H1 (cell line): ENCODE measurements at regions of chr1 and their contacts with region 1.

Region 1: DNA sequence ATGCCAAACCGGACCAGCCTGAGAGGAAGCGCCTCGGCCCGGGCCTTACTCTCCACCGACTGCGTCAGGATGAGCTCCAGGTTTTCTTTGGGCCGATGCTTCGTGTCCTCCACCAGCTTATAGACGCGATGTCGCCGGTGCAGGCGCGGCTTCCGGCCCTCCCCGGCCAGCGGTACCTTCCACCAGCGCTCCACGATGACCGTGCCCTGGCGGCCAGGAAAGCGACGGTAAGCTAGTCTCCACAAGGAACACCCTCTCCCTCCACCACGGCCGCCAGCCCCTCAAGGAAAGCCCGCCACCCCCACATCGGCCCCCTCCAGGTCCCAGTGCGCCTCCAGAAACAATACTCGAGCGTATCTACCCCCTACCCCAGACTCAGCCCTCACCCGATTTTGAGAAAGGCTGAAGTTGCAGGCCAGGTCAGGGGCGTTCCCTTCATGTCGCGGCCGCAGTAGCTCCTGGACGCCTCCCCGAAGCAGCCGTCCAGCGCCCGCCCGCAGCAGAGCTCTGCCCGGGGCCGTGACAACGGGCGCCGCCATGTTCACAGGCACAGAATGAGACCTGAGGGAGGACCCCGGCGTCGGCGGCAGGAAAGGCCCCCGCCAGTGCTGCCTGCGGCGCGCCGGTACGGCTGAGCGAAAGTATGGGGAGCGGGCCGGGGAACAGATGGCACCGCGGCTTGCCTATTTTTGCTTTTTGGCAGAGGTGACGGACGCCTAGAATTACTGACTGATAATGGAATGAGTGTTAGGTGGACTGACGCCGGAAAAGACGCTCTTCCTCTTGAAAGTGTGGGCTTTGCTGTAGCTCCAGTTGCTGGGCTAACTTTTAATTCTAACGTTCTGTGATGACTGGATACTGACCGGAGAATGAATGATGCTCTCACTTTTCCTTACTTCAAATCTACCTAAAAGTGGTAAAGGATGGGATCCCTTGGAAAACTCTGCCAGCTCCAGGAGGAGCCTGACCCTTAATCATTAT is at the start of gene MRPL9:
- DNase-seq: peak; percentile 36 to 91
- H3K4me3 ChIP-seq: peak within 1 kb of the TSS; percentile 88 to 96 (median 92)
- H3K27ac ChIP-seq: peak within 1 kb of the TSS; percentile 85
- H3K4me1 ChIP-seq: 0 out of 7 replicates have a peak, but pooled peaks cover 0 to 1% (median 0%) of the 10 kb centered on the region in 4 experiments
- H3K27me3 ChIP-seq: no peaks in the 10 kb centered on the region
- CTCF ChIP-seq: no peak
- EP300 ChIP-seq: no peak
- POLR2A ChIP-seq: peak; percentile 88 to 92
- RAD21 ChIP-seq: no peak; a peak in 1 of 4 replicates
- total RNA-seq, gene MRPL9: 96.4 and 113 TPM in 2 replicates

Region 2: GRCh38 chr1:151639466-151639865 is 123.8 kb before region 1 on chr1:
- CTCF ChIA-PET with region 1: no interaction called
- POLR2A ChIA-PET with region 1: no interaction called
- DNase-seq: no peak
- H3K4me3 ChIP-seq: no peak overlapping the region
- H3K27ac ChIP-seq: no peak overlapping the region
- H3K4me1 ChIP-seq: no peaks in the 10 kb centered on the region; a peak in 1 of 7 replicates
- H3K27me3 ChIP-seq: no peaks in the 10 kb centered on the region
- CTCF ChIP-seq: no peak
- EP300 ChIP-seq: no peak
- POLR2A ChIP-seq: no peak
- RAD21 ChIP-seq: no peak

Region 3: DNA sequence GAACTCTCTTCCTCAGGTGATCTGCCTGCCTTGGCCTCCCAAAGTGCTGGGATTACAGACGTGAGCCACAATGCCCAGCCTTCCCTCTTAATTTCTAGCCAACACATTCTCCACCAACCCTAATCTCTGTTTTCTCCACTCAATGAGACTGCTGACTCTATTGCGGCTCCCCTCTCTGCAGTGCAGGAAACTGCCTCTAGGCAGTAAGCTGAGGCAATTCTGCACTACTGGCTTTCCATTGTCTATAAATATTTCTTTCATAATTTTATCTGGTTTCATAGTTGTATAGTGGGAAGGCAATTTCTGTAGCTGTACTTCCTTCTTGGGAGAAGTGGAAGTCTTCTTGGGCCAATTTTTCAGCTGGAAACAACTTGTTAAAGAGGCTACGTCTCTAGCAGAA is 10.1 kb before region 1 on chr1:
- CTCF ChIA-PET with region 1: interaction called, 4 read pairs
- POLR2A ChIA-PET with region 1: interaction called, 12 read pairs
- DNase-seq: no peak
- H3K4me3 ChIP-seq: no peak overlapping the region
- H3K27ac ChIP-seq: no peak overlapping the region
- H3K4me1 ChIP-seq: no peaks in the 10 kb centered on the region
- H3K27me3 ChIP-seq: no peaks in the 10 kb centered on the region
- CTCF ChIP-seq: no peak
- EP300 ChIP-seq: no peak
- POLR2A ChIP-seq: no peak
- RAD21 ChIP-seq: no peak

Region 4: GRCh38 chr1:151790071-151790940 is 27.1 kb after region 1 on chr1 and contains the start of gene TDRKH:
- CTCF ChIA-PET with region 1: interaction called, 4 read pairs
- POLR2A ChIA-PET with region 1: interaction called, 10 read pairs
- DNase-seq: peak; percentile 93 to 97
- H3K4me3 ChIP-seq: peak within 1 kb of the TSS; percentile 85 to 95 (median 88)
- H3K27ac ChIP-seq: no peak within 1 kb of the TSS
- H3K4me1 ChIP-seq: peaks cover 0 to 2% (median 0%) of the 10 kb centered on the region in 4 experiments; a peak in 1 of 7 replicates
- H3K27me3 ChIP-seq: no peaks in the 10 kb centered on the region
- CTCF ChIP-seq: peak; percentile 34 to 56 (median 38)
- EP300 ChIP-seq: peak in 1 of 2 experiments; percentile 7; a peak in 1 of 3 replicates
- POLR2A ChIP-seq: peak in 1 of 2 experiments; percentile 51; a peak in 1 of 3 replicates
- RAD21 ChIP-seq: peak; percentile 31 to 33; a peak in 3 of 4 replicates
- total RNA-seq, gene TDRKH: 23.8 and 26.1 TPM in 2 replicates